Caco-2 (cell line): ENCODE measurements at regions of chr1 and their contacts with region 1.

Region 1: DNA sequence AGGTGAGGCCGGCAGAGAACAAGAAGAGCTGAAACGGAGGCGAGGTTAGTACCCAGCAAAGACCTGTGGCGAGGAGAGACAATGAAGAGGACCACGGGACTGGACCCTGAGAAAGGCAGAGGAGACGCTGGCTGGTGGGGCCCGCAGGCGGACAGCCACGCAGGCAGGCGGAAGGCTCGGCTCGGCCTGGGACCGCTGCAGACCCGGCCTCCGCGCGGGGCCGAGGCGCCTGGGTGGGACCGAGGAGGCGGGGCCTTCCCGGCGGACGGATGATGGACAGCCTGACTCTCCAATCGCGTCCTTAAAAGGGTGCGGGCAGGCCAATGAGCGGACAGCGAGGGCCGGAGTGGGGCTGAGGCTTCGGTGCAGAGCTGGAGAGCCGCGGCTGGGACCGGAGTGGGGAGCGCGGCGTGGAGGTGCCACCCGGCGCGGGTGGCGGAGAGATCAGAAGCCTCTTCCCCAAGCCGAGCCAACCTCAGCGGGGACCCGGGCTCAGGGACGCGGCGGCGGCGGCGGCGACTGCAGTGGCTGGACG is at the start of gene MPZL1:
- DNase-seq: peak; percentile 96 to 98
- H3K4me3 ChIP-seq: peak within 1 kb of the TSS; percentile 81
- H3K4me3 Mint-ChIP-seq: peak within 1 kb of the TSS; percentile 67
- H3K27ac Mint-ChIP-seq: peak within 1 kb of the TSS; percentile 85
- H3K4me1 ChIP-seq: peaks cover 63% of the 10 kb centered on the region
- H3K4me1 Mint-ChIP-seq: peaks cover 55% of the 10 kb centered on the region
- H3K27me3 ChIP-seq: no peaks in the 10 kb centered on the region
- H3K27me3 Mint-ChIP-seq: no peaks in the 10 kb centered on the region
- CTCF ChIP-seq: no peak
- total RNA-seq, gene MPZL1: 273 and 280 TPM in 2 replicates

Region 2: DNA sequence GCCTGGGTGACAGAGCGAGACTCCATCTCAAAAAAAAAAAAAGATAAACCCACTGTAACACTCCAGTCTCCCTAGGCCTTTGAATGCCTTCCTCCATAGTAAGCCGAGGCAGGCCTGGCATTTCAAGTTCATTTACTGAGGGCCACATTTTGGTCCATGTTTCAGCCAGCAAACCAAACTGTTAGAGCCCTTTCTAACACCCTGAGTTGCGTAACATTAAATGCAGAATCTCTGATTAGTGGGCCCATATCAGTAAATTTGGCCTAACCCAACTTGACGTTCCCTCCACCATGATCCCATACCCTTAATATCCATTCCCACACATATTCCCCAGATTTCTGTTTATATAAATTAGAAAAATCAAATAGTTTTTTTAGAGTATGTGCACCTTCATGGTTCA is 12.5 kb after region 1 on chr1:
- CTCF ChIA-PET with region 1: no interaction called
- POLR2A ChIA-PET with region 1: no interaction called
- intact Hi-C with region 1: no loop called
- DNase-seq: no peak
- H3K4me3 ChIP-seq: no peak overlapping the region
- H3K4me3 Mint-ChIP-seq: no peak overlapping the region
- H3K27ac Mint-ChIP-seq: no peak overlapping the region
- H3K4me1 ChIP-seq: peaks cover 10% of the 10 kb centered on the region; the same call in 1 of the 2 replicates
- H3K4me1 Mint-ChIP-seq: no peaks in the 10 kb centered on the region
- H3K27me3 ChIP-seq: no peaks in the 10 kb centered on the region
- H3K27me3 Mint-ChIP-seq: no peaks in the 10 kb centered on the region
- CTCF ChIP-seq: no peak

Region 3: GRCh38 chr1:167744901-167745300 is 23.2 kb after region 1 on chr1:
- CTCF ChIA-PET with region 1: no interaction called
- POLR2A ChIA-PET with region 1: no interaction called
- intact Hi-C with region 1: loop called (anchors 2 kb)
- DNase-seq: no peak
- H3K4me3 ChIP-seq: no peak overlapping the region
- H3K4me3 Mint-ChIP-seq: no peak overlapping the region
- H3K27ac Mint-ChIP-seq: no peak overlapping the region
- H3K4me1 ChIP-seq: peaks cover 66% of the 10 kb centered on the region
- H3K4me1 Mint-ChIP-seq: peaks cover 69% of the 10 kb centered on the region
- H3K27me3 ChIP-seq: no peaks in the 10 kb centered on the region
- H3K27me3 Mint-ChIP-seq: no peaks in the 10 kb centered on the region
- CTCF ChIP-seq: no peak

Region 4: GRCh38 chr1:167767761-167768160 is 46.1 kb after region 1 on chr1:
- CTCF ChIA-PET with region 1: interaction called, 5 read pairs
- POLR2A ChIA-PET with region 1: no interaction called
- intact Hi-C with region 1: loop called (anchors 5 kb)
- DNase-seq: no peak
- H3K4me3 ChIP-seq: no peak overlapping the region
- H3K4me3 Mint-ChIP-seq: no peak overlapping the region
- H3K27ac Mint-ChIP-seq: peak overlapping the region; percentile 1
- H3K4me1 ChIP-seq: peaks cover 14% of the 10 kb centered on the region; the same call in 1 of the 2 replicates
- H3K4me1 Mint-ChIP-seq: peaks cover 35% of the 10 kb centered on the region
- H3K27me3 ChIP-seq: no peaks in the 10 kb centered on the region
- H3K27me3 Mint-ChIP-seq: no peaks in the 10 kb centered on the region
- CTCF ChIP-seq: no peak